T-cell (primary cell): ENCODE measurements at regions of chr3 and their contacts with region 1.

Region 1: GRCh38 chr3:15223685-15224572 is 17.9 kb downstream of the CAPN7 start:
- DNase-seq: no peak
- ATAC-seq: no peak
- H3K4me3 ChIP-seq: no peak overlapping the region
- H3K4me3 Mint-ChIP-seq: no peak overlapping the region
- H3K27ac ChIP-seq: no peak overlapping the region
- H3K27ac Mint-ChIP-seq: no peak overlapping the region
- H3K4me1 ChIP-seq: no peaks in the 10 kb centered on the region
- H3K4me1 Mint-ChIP-seq: peaks cover under 1 to 8% (median 3%) of the 10 kb centered on the region in 3 donors
- H3K27me3 ChIP-seq: no peaks in the 10 kb centered on the region
- H3K27me3 Mint-ChIP-seq: no peaks in the 10 kb centered on the region

Region 2: GRCh38 chr3:15645736-15646501 is 422.0 kb after region 1 on chr3:
- CTCF ChIA-PET with region 1: interaction called in 1 of 2 experiments, 10 read pairs
- POLR2A ChIA-PET with region 1: no interaction called
- DNase-seq: no peak
- ATAC-seq: no peak
- H3K4me3 ChIP-seq: no peak overlapping the region
- H3K4me3 Mint-ChIP-seq: peak overlapping the region in 1 of 3 donors; percentile 64
- H3K27ac ChIP-seq: no peak overlapping the region
- H3K27ac Mint-ChIP-seq: no peak overlapping the region
- H3K4me1 ChIP-seq: peaks cover 24 to 48% of the 10 kb centered on the region in 2 experiments
- H3K4me1 Mint-ChIP-seq: peaks cover 54 to 66% (median 64%) of the 10 kb centered on the region in 3 donors
- H3K27me3 ChIP-seq: peaks cover 0 to 1% of the 10 kb centered on the region in 2 experiments
- H3K27me3 Mint-ChIP-seq: peaks cover 0 to 3% of the 10 kb centered on the region in 2 donors